Uterus (tissue), 4 donors: ENCODE measurements at regions of chr13 and their contacts with region 1.

Region 1: DNA sequence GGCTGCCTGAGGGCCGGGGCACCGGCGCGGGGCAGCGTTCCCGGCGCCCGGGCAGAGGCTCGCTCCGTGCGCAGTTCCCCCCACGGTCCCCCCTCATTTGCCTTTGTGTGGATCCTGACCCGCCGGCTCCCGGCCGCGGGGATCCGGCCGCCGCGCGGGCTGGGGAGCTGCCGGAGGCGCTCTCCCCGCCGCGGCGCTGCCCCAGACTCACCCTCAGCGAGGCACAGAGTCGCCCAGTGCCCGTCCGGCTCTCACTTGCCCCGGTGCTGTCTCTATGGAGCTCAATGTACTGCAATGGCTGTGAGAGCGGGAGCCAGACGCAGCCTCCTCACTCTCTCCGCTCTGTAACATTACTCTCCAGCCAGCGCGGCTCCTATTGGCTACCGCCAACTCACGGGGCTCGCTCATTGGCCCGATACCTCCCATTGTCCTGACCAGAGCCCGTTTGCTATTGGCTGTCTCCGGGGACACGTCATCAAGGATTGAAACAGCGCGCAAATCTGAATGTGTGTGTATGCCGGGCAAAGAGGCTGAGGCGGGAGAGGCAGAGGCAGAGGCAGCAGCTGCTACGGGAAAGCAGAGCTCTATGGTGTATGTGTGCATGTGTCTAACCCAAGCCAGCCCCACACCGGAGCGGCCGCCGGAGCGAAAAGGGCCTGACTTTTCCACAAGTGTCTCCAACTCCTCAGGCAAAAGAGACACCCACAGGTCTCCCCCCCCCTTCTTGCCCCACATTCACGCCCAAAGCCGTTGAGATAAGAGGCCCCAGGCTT is at the start of gene HMGB1:
- DNase-seq: peak; percentile 97 to 98
- H3K4me3 ChIP-seq: peak within 1 kb of the TSS; percentile 67 to 97
- H3K27ac ChIP-seq: peak within 1 kb of the TSS; percentile 99 to 100
- H3K4me1 ChIP-seq: peaks cover 0 to 4% of the 10 kb centered on the region in 2 donors
- H3K27me3 ChIP-seq: no peaks in the 10 kb centered on the region
- CTCF ChIP-seq: peak in 1 of 4 experiments; percentile 4
- POLR2A ChIP-seq: peak; percentile 100
- total RNA-seq, gene HMGB1: 223 to 629 (median 402) TPM

Region 2: GRCh38 chr13:30132623-30133553 is 332.9 kb before region 1 on chr13:
- intact Hi-C with region 1: loop called (anchors 5 kb)
- DNase-seq: peak; percentile 98 to 99
- H3K4me3 ChIP-seq: no peak overlapping the region
- H3K27ac ChIP-seq: peak overlapping the region; percentile 68 to 72
- H3K4me1 ChIP-seq: peaks cover 3 to 10% of the 10 kb centered on the region in 2 donors
- H3K27me3 ChIP-seq: no peaks in the 10 kb centered on the region
- CTCF ChIP-seq: peak; percentile 93 to 97 (median 94)
- POLR2A ChIP-seq: peak in 1 of 2 donors; percentile 14

Region 3: GRCh38 chr13:30341815-30342570 is 123.8 kb before region 1 on chr13:
- intact Hi-C with region 1: loop called (anchors 5 kb)
- DNase-seq: peak; percentile 86 to 90
- H3K4me3 ChIP-seq: no peak overlapping the region
- H3K27ac ChIP-seq: peak overlapping the region; percentile 86 to 94
- H3K4me1 ChIP-seq: peaks cover 16 to 33% of the 10 kb centered on the region in 2 donors
- H3K27me3 ChIP-seq: no peaks in the 10 kb centered on the region
- CTCF ChIP-seq: no peak
- POLR2A ChIP-seq: no peak

Region 4: GRCh38 chr13:30395192-30396084 is 70.3 kb before region 1 on chr13:
- intact Hi-C with region 1: loop called (anchors 5 kb)
- DNase-seq: peak; percentile 95 to 97
- H3K4me3 ChIP-seq: peak overlapping the region; percentile 39
- H3K27ac ChIP-seq: peak overlapping the region; percentile 93 to 97
- H3K4me1 ChIP-seq: no peaks in the 10 kb centered on the region
- H3K27me3 ChIP-seq: no peaks in the 10 kb centered on the region
- CTCF ChIP-seq: no peak
- POLR2A ChIP-seq: peak; percentile 29 to 52

Region 5: GRCh38 chr13:30572859-30573275 is 107.1 kb after region 1 on chr13:
- intact Hi-C with region 1: loop called (anchors 10 kb)
- DNase-seq: no peak
- H3K4me3 ChIP-seq: peak overlapping the region; percentile 31 to 35
- H3K27ac ChIP-seq: peak overlapping the region; percentile 73 to 88
- H3K4me1 ChIP-seq: no peaks in the 10 kb centered on the region
- H3K27me3 ChIP-seq: no peaks in the 10 kb centered on the region
- CTCF ChIP-seq: peak; percentile 18 to 33 (median 26)
- POLR2A ChIP-seq: no peak

Region 6: DNA sequence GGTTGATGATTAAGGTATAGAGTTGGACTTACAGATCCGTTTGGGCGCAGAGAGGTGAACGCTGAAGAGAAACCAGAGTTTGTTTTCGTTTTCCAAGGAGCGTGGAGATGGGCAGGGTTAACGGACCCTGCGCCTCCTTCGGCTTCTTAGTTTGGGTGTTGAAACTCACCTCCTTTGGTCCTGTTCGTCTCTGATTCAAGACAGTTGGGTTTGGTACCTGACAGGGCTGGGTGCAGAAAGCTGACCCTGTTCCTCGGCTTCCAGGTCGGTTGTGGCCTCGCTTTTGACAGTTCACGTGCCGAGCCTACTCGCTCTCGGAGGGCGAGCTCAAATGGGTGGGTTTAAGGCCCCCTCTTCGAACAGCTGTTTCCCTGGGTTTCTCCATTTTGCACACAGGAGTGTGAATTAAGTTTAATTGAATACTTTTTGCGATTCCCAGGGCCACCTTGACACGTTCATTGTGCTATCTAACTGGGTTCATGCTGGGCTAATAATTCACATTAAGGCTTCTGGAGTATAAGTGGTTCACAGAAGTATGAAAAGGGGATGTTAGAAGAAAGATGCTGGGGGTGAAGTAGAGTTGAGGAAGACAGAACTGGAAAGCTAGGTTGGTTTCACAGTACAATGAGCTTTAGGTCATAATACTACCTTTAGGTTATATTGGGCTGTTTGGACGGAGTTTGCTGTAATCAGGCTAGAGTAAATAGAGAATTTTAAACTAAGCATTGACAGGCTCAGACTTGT is 152.6 kb after region 1 on chr13:
- intact Hi-C with region 1: no loop called
- DNase-seq: no peak
- H3K4me3 ChIP-seq: peak overlapping the region; percentile 52 to 68
- H3K27ac ChIP-seq: peak overlapping the region; percentile 98 to 100
- H3K4me1 ChIP-seq: no peaks in the 10 kb centered on the region
- H3K27me3 ChIP-seq: no peaks in the 10 kb centered on the region
- CTCF ChIP-seq: no peak
- POLR2A ChIP-seq: no peak

Region 7: GRCh38 chr13:30792285-30793000 is 326.7 kb after region 1 on chr13:
- intact Hi-C with region 1: loop called (anchors 10 kb)
- DNase-seq: peak; percentile 78
- H3K4me3 ChIP-seq: no peak overlapping the region
- H3K27ac ChIP-seq: peak overlapping the region; percentile 63 to 64
- H3K4me1 ChIP-seq: no peaks in the 10 kb centered on the region
- H3K27me3 ChIP-seq: no peaks in the 10 kb centered on the region
- CTCF ChIP-seq: peak; percentile 6 to 47 (median 24)
- POLR2A ChIP-seq: no peak